A549 (cell line): ENCODE measurements at regions of chr11 and their contacts with region 1.

Region 1: DNA sequence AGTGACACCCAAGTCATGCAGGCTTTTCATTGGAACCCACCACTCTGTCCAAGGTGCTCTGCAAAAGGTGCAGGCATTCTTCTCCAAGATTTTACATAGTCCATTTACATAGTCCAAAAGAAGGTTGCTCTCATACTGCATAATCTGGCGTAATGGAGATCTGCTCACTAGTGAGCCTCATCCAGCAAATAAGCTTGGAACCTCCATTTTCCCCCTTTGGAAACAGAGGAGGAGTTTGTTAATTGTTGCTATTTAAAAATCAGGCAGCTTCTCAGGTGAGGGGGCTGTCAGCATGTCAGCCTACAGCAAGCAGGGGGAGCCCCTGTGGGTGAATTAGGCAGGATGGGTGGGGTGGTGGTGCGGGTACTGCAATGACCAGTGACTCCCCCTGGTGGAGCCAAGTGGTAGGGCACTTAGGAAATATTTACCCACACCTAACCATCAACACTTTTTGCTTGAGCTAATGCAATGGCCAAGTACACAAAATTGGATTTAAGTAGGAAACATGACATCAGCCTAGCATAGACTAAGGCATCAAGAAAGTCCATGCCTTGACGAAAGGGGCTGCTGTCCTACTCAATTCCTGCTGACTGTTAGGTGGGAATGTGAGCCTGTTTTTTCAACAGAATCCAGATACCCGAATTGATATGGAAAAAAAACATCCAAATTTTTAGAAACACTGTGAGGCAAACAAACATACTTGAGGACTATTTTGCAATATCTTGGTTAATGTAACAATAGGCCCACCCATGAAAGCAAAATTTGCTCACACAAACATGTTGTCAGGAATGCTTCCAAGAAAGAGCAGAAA is 64.5 kb downstream of the AMBRA1 start:
- DNase-seq: peak; percentile 73 to 89
- ATAC-seq: peak; percentile 85 to 97
- H3K4me3 ChIP-seq: no peak overlapping the region
- H3K27ac ChIP-seq: no peak overlapping the region
- H3K4me1 ChIP-seq: no peaks in the 10 kb centered on the region
- CTCF ChIP-seq: peak; percentile 67
- EP300 ChIP-seq: no peak
- POLR2A ChIP-seq: no peak
- RAD21 ChIP-seq: peak; percentile 46 to 55; a peak in 4 of 5 replicates

Region 2: GRCh38 chr11:46447544-46447943 is 81.8 kb before region 1 on chr11:
- CTCF ChIA-PET with region 1: no interaction called
- POLR2A ChIA-PET with region 1: no interaction called
- DNase-seq: no peak
- ATAC-seq: no peak
- H3K4me3 ChIP-seq: no peak overlapping the region
- H3K27ac ChIP-seq: no peak overlapping the region
- H3K4me1 ChIP-seq: no peaks in the 10 kb centered on the region
- CTCF ChIP-seq: no peak
- EP300 ChIP-seq: no peak
- POLR2A ChIP-seq: no peak
- RAD21 ChIP-seq: no peak

Region 3: DNA sequence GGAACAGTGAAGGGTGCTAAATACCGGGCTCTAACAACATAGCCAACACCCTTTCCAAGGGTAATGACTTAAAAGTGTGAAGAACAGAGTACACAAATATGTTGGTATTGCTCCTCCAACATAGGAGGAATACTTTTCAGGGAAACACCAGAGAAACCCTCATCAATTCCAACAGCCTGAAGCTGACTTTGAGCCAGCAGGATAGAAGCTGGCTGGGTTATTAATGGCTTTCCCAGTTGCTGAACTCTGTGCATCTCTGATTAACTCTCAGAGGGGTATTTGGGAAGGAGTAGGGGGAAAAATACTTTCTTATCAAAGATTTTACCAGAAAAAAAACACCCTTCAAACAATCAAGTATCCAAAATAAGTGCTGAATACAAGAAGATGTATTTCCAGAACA is 31.1 kb before region 1 on chr11:
- CTCF ChIA-PET with region 1: interaction called, 16 read pairs
- POLR2A ChIA-PET with region 1: no interaction called
- DNase-seq: no peak
- ATAC-seq: no peak
- H3K4me3 ChIP-seq: no peak overlapping the region
- H3K27ac ChIP-seq: no peak overlapping the region
- H3K4me1 ChIP-seq: 0 out of 3 replicates have a peak, but pooled peaks cover 4% of the 10 kb centered on the region
- CTCF ChIP-seq: no peak
- EP300 ChIP-seq: no peak
- POLR2A ChIP-seq: no peak
- RAD21 ChIP-seq: no peak

Region 4: DNA sequence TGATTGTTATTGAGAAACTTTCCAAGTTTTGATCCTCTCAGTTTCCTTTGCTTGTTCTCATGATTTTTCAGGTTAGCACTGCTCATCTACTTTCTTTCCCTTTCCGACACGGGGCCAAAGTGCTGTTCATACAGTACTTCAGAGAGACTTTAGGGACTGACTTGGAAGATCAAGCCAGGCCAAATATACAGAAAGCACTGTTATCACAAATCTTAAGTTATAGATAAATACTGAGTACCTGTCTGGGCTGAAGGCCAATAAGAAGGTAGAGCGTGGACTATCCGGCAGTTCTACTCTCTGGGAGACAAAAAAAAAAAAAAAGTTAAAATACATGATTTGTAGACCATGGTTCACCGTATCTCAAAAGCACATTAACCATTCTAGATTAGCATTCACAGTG is 18.3 kb after region 1 on chr11:
- CTCF ChIA-PET with region 1: interaction called, 19 read pairs
- POLR2A ChIA-PET with region 1: no interaction called
- DNase-seq: no peak
- ATAC-seq: no peak
- H3K4me3 ChIP-seq: no peak overlapping the region
- H3K27ac ChIP-seq: no peak overlapping the region
- H3K4me1 ChIP-seq: 0 out of 3 replicates have a peak, but pooled peaks cover 2% of the 10 kb centered on the region
- CTCF ChIP-seq: no peak
- EP300 ChIP-seq: no peak
- POLR2A ChIP-seq: no peak
- RAD21 ChIP-seq: no peak